Activated naive CD4-positive, alpha-beta T cell treated with anti-CD3 and anti-CD28 coated beads for 36 hours (primary cell): ENCODE measurements at regions of chr14 and their contacts with region 1.

Region 1: GRCh38 chr14:24241829-24242443 is 487 bp downstream of the TINF2 start:
- DNase-seq: peak; percentile 94
- H3K4me3 Mint-ChIP-seq: peak overlapping the region; percentile 97
- H3K27ac Mint-ChIP-seq: peak overlapping the region; percentile 100
- H3K4me1 Mint-ChIP-seq: peaks cover 49% of the 10 kb centered on the region
- H3K27me3 Mint-ChIP-seq: no peaks in the 10 kb centered on the region

Region 2: DNA sequence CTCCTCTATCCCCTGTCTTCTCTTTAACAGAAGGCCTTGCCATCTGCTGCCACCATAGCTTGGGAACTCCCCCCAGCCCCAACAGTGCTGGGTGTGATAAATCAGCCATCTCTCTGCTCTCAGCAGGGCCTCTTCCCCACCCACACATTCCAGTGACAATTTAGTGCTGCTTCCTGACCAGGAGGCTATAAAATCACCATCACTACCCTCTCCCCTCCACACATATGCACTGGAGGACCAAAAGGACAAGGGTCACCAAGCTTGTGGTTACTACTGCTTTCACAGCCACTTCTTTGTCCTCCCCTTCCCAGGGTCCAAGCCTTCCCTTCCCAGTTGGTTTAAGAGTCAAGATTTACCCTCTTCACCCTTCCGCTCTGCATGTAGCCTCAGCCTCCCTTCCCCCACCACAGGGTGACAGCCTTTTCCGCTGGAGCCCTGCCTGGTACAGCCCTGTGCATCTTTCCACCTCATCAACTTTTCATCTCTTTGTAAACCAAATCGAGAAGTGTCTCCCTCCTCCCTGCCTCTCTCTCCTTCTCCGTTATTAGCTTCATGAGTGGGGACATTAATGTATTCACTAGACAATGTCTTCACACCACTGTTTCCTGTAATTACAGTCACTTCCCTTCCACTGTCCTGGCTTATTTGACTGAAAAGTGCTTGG is 1216.7 kb before region 1 on chr14:
- CTCF ChIA-PET with region 1: no interaction called
- intact Hi-C with region 1: no loop called
- DNase-seq: peak; percentile 55
- H3K4me3 Mint-ChIP-seq: peak overlapping the region; percentile 16
- H3K27ac Mint-ChIP-seq: peak overlapping the region; percentile 85
- H3K4me1 Mint-ChIP-seq: peaks cover 73% of the 10 kb centered on the region
- H3K27me3 Mint-ChIP-seq: no peaks in the 10 kb centered on the region

Region 3: GRCh38 chr14:24013654-24014514 is 228.1 kb before region 1 on chr14:
- CTCF ChIA-PET with region 1: no interaction called
- intact Hi-C with region 1: loop called (anchors 1 kb)
- DNase-seq: peak; percentile 66
- H3K4me3 Mint-ChIP-seq: no peak overlapping the region
- H3K27ac Mint-ChIP-seq: no peak overlapping the region
- H3K4me1 Mint-ChIP-seq: peaks cover 25% of the 10 kb centered on the region
- H3K27me3 Mint-ChIP-seq: no peaks in the 10 kb centered on the region

Region 4: DNA sequence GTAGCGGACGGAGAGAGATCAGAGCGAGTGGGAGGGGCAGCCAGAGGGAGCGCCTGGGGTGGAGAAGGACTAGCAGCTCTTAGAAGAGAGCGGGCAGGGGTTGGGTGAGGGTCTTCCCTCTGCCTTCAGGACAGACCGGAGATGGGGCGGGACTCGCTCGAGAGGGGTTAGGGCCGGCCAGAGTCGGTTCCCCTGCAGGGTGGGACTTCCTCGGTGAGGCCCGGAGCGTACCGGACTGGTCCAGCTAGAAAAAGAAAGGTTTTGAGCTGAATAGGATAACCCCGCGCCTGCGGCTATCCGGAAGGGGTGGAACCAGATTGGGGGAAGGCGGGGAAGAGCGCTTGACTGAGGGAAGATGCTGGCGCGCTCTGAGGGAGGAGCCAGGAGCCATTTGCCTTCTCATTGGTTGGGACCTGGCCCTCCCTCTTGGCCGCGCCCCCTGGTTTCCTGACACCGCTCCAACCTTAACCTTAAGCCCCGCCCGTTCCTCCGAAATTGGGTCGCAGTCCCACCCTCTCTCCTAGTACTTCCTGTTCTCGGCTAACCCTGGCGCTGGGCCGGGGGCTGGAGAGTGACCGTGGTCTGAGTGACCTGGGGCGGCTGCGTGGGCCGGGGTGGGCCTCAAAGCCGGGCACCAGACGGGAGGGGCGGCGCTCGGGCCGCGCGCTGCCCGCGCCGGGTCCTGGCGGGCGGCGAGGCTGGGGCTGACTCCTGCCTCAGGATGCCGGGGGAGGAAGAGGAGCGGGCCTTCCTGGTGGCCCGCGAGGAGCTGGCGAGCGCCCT is 94.8 kb before region 1 on chr14 and contains the start of gene RNF31:
- CTCF ChIA-PET with region 1: interaction called, 3 read pairs
- intact Hi-C with region 1: loop called (anchors 1 kb)
- DNase-seq: peak; percentile 99
- H3K4me3 Mint-ChIP-seq: peak within 1 kb of the TSS; percentile 97
- H3K27ac Mint-ChIP-seq: peak within 1 kb of the TSS; percentile 99
- H3K4me1 Mint-ChIP-seq: peaks cover 54% of the 10 kb centered on the region
- H3K27me3 Mint-ChIP-seq: no peaks in the 10 kb centered on the region
- total RNA-seq, gene RNF31: 51.1 to 53.8 TPM

Region 5: DNA sequence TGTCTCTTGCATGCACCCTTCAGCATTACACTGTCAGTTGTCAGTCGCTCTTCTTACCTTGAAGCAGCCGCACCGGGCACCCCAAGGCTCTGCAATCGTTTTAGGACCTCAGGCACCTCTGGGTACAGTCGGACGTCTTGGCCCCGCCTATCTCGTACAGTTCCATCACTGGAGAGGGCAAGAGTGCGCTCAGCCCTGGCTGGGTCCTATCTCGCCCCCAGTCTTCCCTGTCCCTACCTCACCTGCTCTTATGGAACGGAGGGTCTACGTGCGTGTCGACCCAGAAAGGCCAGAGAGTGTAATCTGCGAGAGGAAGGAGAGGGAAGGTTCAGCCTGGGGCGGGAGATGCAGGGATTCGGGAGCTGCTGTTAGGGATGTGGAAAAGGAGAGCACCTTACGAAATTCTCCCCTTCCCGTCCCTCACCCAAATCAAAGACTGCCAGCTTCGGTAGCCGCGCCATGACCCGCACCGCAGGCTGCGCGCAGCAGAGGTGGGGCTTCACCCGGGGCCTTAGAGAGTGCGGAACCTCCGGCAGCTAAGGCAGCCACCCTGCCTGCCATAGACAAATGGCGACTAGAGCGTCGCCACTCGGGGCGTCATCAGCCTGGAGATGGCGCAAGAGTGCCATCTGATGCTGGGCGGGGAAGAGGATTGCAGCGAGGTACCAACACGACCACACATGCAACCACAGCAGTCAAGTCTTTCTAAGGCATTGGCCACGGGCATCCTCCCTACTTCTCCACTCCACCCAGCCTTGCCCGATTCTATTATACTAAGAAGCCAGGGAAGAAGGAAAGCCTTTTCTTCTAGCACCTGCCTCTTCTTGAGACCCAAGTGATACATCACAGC is 26.2 kb before region 1 on chr14 and contains the start of gene MDP1:
- CTCF ChIA-PET with region 1: interaction called, 19 read pairs
- intact Hi-C with region 1: loop called (anchors 1 kb)
- DNase-seq: peak; percentile 93
- H3K4me3 Mint-ChIP-seq: peak within 1 kb of the TSS; percentile 86
- H3K27ac Mint-ChIP-seq: peak within 1 kb of the TSS; percentile 96
- H3K4me1 Mint-ChIP-seq: peaks cover 45% of the 10 kb centered on the region
- H3K27me3 Mint-ChIP-seq: no peaks in the 10 kb centered on the region
- total RNA-seq, gene MDP1: 10.2 to 13.6 TPM

Region 6: DNA sequence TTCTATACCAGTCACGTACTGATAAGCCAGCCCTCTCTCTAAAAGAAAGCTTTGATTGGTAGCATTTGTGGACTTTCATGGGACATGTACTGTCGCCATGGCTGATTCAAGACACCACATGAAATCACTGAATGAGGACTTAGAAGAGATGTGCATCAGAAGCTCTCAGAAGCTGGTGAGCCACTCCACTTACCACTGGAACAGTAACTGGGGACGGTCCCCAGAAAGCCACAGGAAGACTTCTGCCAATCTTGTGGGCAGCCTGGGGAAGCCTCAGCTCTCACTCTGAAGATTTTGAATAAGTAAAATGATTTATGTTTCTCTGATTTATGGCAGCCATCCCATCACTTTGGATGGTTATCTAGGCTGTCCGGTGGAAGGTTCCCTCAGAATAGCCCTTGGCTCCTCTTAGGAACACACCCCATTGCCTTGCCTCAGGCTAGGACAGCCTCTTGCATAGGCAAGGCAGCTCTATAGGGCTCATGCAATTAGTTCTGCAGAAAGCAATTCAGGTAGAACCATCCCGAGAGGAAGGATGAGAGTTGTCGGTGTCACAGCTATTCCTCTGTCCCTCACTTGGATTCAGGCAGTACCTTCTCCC is 47.8 kb after region 1 on chr14:
- CTCF ChIA-PET with region 1: interaction called, 310 read pairs
- intact Hi-C with region 1: loop called (anchors 2 kb)
- DNase-seq: peak; percentile 93
- H3K4me3 Mint-ChIP-seq: no peak overlapping the region
- H3K27ac Mint-ChIP-seq: peak overlapping the region; percentile 75
- H3K4me1 Mint-ChIP-seq: peaks cover 25% of the 10 kb centered on the region
- H3K27me3 Mint-ChIP-seq: no peaks in the 10 kb centered on the region

Region 7: DNA sequence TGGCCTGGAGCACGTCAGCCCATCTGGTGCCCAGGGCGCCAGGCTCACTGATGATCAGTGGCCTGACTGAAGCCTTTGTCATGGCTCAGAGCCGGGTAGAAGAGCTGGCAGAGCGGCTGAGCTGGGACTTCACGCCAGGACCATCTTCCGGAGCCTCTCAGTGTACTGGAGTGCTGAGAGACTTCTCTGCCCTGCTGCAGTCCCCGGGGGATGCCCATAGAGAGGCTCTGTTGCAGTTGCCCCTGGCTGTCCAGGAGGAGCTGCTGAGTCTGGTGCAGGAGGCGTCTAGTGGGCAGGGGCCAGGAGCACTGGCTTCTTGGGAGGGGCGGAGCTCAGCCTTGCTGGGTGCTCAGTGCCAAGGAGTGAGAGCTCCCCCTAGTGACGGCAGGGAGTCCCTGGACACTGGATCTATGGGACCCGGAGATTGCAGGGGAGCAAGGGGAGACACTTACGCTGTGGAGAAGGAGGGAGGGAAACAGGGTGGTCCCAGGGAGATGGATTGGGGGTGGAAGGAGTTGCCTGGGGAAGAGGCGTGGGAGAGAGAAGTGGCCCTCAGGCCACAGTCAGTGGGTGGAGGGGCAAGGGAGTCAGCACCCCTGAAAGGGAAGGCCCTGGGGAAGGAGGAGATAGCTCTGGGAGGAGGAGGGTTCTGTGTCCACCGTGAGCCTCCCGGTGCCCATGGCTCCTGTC is 189.8 kb after region 1 on chr14:
- CTCF ChIA-PET with region 1: interaction called, 14 read pairs
- intact Hi-C with region 1: loop called (anchors 1 kb)
- DNase-seq: peak; percentile 95
- H3K4me3 Mint-ChIP-seq: peak overlapping the region; percentile 95
- H3K27ac Mint-ChIP-seq: peak overlapping the region; percentile 97
- H3K4me1 Mint-ChIP-seq: peaks cover 39% of the 10 kb centered on the region
- H3K27me3 Mint-ChIP-seq: no peaks in the 10 kb centered on the region